GM10248 (cell line): ENCODE measurements at regions of chr2 and their contacts with region 1.

Region 1: DNA sequence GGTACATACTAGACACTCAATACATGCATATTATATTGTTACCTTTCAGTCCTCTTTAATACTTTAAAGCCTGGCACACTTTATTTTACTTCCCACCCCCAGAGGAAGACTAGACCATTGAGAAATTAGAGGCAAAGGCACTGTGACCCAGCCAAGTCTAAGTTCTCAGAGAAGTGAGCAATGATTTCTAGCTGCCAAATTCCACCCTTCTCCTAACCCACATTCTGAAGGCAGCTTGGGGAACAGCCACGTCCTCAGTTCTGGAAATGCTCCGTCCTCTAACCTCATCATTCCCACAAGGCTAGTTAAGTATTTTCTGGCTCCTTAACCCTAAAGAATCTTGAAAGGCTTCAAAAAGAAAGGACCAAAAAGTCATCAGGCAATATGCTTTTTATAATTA is 86.6 kb downstream of the COL5A2 start:
- DNase-seq: no peak
- CTCF ChIP-seq: no peak

Region 2: GRCh38 chr2:188983427-188984064 is 109.4 kb before region 1 on chr2:
- CTCF ChIA-PET with region 1: no interaction called
- POLR2A ChIA-PET with region 1: no interaction called
- DNase-seq: no peak
- CTCF ChIP-seq: no peak

Region 3: GRCh38 chr2:189076572-189076971 is 16.4 kb before region 1 on chr2:
- CTCF ChIA-PET with region 1: interaction called, 33 read pairs
- POLR2A ChIA-PET with region 1: no interaction called
- DNase-seq: no peak
- CTCF ChIP-seq: no peak

Region 4: GRCh38 chr2:189412330-189412953 is 319.5 kb after region 1 on chr2:
- CTCF ChIA-PET with region 1: interaction called, 10 read pairs
- POLR2A ChIA-PET with region 1: no interaction called
- DNase-seq: peak; percentile 39
- CTCF ChIP-seq: peak; percentile 75